ENCODE measurements at regions of chr11 and their contacts with region 1.

Region 1: GRCh38 chr11:64747961-64748665 is 4.2 kb upstream of the RASGRP2 start:
- DNase-seq: no peak
- H3K4me3 Mint-ChIP-seq: no peak overlapping the region
- H3K27ac Mint-ChIP-seq: peak overlapping the region; percentile 44
- H3K4me1 Mint-ChIP-seq: peaks cover 49% of the 10 kb centered on the region
- H3K27me3 Mint-ChIP-seq: no peaks in the 10 kb centered on the region

Region 2: GRCh38 chr11:64767344-64768299 is 19.5 kb after region 1 on chr11:
- CTCF ChIA-PET with region 1: interaction called, 132 read pairs
- POLR2A ChIA-PET with region 1: interaction called, 435 read pairs
- DNase-seq: peak; percentile 83
- H3K4me3 Mint-ChIP-seq: no peak overlapping the region
- H3K27ac Mint-ChIP-seq: peak overlapping the region; percentile 85
- H3K4me1 Mint-ChIP-seq: peaks cover 90% of the 10 kb centered on the region
- H3K27me3 Mint-ChIP-seq: no peaks in the 10 kb centered on the region

Measured in activated CD4-positive, alpha-beta memory T cell treated with anti-CD3 and anti-CD28 coated beads, Interleukin-2, amount 10 ng/mL, durations not matched to agents 7 days and 5 days (primary cell).